Activated B cell treated with CpG ODN at 0.5 μM for 24 hours (primary cell): ENCODE measurements at regions of chr2 and their contacts with region 1.

Region 1: GRCh38 chr2:99337113-99338028 is at the start of gene EIF5B:
- DNase-seq: peak; percentile 92
- ATAC-seq: peak; percentile 69
- H3K4me3 Mint-ChIP-seq: no peak within 1 kb of the TSS
- H3K27ac Mint-ChIP-seq: no peak within 1 kb of the TSS
- H3K4me1 Mint-ChIP-seq: peaks cover 28% of the 10 kb centered on the region
- H3K27me3 Mint-ChIP-seq: no peaks in the 10 kb centered on the region
- CTCF ChIP-seq: no peak
- total RNA-seq, gene EIF5B: 52.3 and 55.0 TPM in 2 replicates

Region 2: GRCh38 chr2:98731041-98731893 is 606.1 kb before region 1 on chr2 and contains the start of gene MGAT4A:
- CTCF ChIA-PET with region 1: no interaction called
- POLR2A ChIA-PET with region 1: no interaction called
- intact Hi-C with region 1: loop called (anchors 2 kb)
- DNase-seq: peak; percentile 76
- ATAC-seq: peak; percentile 87
- H3K4me3 Mint-ChIP-seq: peak within 1 kb of the TSS; percentile 83
- H3K27ac Mint-ChIP-seq: peak within 1 kb of the TSS; percentile 84
- H3K4me1 Mint-ChIP-seq: peaks cover 56% of the 10 kb centered on the region
- H3K27me3 Mint-ChIP-seq: no peaks in the 10 kb centered on the region
- CTCF ChIP-seq: no peak
- total RNA-seq, gene MGAT4A: 12.6 and 15.7 TPM in 2 replicates

Region 3: DNA sequence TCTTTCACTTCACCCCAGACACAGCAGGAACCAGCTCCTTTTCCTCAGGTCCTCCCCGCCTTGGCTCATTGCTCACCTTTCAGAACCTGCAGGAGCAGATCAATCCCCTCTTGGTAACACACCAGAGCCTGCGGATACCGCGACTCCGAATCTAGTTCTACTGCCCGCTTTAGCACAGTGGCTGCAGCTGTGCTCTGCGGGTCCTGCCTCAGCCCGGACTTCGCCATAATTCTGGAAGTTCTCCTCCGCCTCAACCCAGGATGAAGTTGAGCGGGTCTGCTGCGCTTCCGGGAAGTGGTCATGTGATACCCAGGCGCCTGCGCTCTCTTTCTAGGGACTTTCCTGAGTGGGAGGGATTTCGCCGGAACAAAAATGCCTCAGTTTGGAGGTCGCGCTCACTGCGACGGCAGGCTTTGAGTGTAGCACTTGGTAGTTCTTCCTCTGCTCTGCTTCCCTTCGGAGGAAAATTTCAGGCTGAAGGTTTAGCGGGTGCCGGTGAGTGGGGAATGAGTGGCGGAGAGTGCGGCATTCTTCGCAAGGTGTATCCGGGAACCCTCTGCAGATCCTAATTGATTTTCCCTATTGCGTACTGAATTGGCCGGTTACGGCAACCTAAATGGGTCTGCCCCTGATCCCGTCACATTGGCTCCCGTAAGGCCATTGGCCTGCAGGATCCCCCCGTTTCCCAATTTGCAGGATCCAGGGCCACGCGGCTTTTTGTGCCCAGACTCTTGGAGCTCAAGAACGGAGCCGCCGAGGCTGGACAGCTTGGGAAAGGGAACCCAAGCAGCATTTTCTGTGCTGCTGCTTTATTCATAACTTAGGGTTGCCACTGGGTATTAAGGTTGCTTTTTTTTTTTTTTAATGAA is 156.4 kb before region 1 on chr2 and contains the starts of genes MITD1 and MRPL30:
- CTCF ChIA-PET with region 1: interaction called, 3 read pairs
- POLR2A ChIA-PET with region 1: interaction called, 28 read pairs
- intact Hi-C with region 1: loop called (anchors 1 kb)
- DNase-seq: peak; percentile 83
- ATAC-seq: peak; percentile 94
- H3K4me3 Mint-ChIP-seq: peak within 1 kb of the TSS; percentile 99
- H3K27ac Mint-ChIP-seq: peak within 1 kb of the TSS; percentile 95
- H3K4me1 Mint-ChIP-seq: peaks cover 63% of the 10 kb centered on the region
- H3K27me3 Mint-ChIP-seq: no peaks in the 10 kb centered on the region
- CTCF ChIP-seq: no peak
- total RNA-seq, gene MITD1: 54.1 and 59.8 TPM in 2 replicates
- total RNA-seq, gene MRPL30: 18.6 and 21.4 TPM in 2 replicates

Region 4: DNA sequence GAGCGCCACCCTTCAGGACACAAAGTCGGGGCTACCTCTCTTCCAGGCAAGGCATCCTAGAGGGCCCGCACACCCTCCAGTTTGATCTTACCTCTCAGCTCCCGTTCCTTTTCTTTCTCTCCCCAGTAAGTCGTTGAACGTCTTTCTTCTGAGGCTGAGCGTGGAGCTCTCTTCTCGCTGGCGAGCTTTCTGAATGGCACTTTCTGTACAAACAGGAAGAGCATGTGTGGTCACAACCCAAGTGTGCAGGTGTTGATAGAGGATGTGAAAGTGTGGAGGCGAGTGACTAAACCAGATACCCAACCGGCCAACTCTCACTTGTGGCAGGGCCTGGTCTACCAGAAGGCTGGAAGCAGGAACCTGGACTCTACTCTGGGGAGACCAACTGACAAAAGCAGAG is 805.0 kb after region 1 on chr2 and contains the start of gene AFF3:
- CTCF ChIA-PET with region 1: no interaction called
- POLR2A ChIA-PET with region 1: no interaction called
- intact Hi-C with region 1: loop called (anchors 5 kb)
- DNase-seq: peak; percentile 65
- ATAC-seq: peak; percentile 86
- H3K4me3 Mint-ChIP-seq: peak within 1 kb of the TSS; percentile 99
- H3K27ac Mint-ChIP-seq: peak within 1 kb of the TSS; percentile 99
- H3K4me1 Mint-ChIP-seq: peaks cover 47% of the 10 kb centered on the region
- H3K27me3 Mint-ChIP-seq: no peaks in the 10 kb centered on the region
- CTCF ChIP-seq: no peak
- total RNA-seq, gene AFF3: 228 and 271 TPM in 2 replicates

Region 5: GRCh38 chr2:101001691-101002561 is 1664.6 kb after region 1 on chr2 and contains the start of gene RPL31:
- CTCF ChIA-PET with region 1: no interaction called
- POLR2A ChIA-PET with region 1: no interaction called
- intact Hi-C with region 1: loop called (anchors 1 kb)
- DNase-seq: peak; percentile 86
- ATAC-seq: peak; percentile 95
- H3K4me3 Mint-ChIP-seq: peak within 1 kb of the TSS; percentile 97
- H3K27ac Mint-ChIP-seq: peak within 1 kb of the TSS; percentile 95
- H3K4me1 Mint-ChIP-seq: peaks cover 38% of the 10 kb centered on the region
- H3K27me3 Mint-ChIP-seq: no peaks in the 10 kb centered on the region
- CTCF ChIP-seq: no peak
- total RNA-seq, gene RPL31: 1,828 and 2,370 TPM in 2 replicates